ENCODE measurements at regions of chr4 and their contacts with region 1.

Region 1: GRCh38 chr4:48963042-48963679 is 22.9 kb upstream of the CWH43 start:
- DNase-seq: peak; percentile 80
- ATAC-seq: peak; percentile 96
- H3K4me3 ChIP-seq: no peak overlapping the region
- H3K4me3 Mint-ChIP-seq: no peak overlapping the region
- H3K27ac ChIP-seq: no peak overlapping the region
- H3K27ac Mint-ChIP-seq: no peak overlapping the region
- H3K4me1 ChIP-seq: no peaks in the 10 kb centered on the region
- H3K4me1 Mint-ChIP-seq: no peaks in the 10 kb centered on the region
- H3K27me3 ChIP-seq: no peaks in the 10 kb centered on the region
- H3K27me3 Mint-ChIP-seq: peaks cover 12% of the 10 kb centered on the region
- CTCF ChIP-seq: peak; percentile 99

Region 2: DNA sequence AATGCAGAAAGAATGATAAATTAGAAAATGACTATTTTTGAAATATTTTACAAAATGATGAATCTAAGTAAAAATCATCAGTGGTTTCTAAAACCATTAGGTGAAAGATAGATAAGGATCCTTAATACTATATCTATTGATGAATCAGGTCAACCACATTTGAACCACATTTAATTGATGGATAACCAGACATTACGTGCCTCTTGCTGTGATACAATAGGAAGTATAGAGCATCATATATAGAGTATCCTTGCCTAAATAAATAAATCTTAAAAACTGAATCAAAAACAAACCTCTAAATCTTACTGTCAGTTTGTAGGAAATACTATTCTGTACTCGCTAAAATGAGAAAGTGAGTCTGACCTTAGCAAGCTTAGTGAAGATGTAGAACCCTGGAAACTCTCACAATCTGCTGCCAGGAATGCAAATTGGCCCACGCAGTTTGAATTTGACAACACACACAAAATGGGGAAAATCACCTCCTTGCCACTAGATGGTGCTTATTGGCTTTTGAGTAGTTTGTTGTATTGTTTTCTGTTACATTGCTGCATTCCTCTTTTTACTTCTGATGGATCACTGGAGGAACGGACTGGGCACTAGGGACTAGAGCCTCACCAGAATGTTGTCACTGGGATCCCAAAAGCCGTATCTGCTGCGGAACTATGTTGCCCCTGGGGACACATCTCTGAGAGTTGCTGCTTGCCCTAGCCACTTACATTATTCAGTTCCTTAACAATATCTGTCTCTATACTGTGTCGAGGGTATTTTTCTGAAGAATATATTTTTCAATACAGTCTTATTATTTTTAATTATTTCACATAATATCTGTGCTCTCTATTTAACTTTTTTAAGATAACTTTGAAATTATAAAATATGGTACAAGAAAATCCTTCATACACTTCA is 647.2 kb before region 1 on chr4:
- CTCF ChIA-PET with region 1: no interaction called
- POLR2A ChIA-PET with region 1: no interaction called
- intact Hi-C with region 1: loop called (anchors 10 kb)
- DNase-seq: peak; percentile 57
- ATAC-seq: peak; percentile 28
- H3K4me3 ChIP-seq: no peak overlapping the region
- H3K4me3 Mint-ChIP-seq: no peak overlapping the region
- H3K27ac ChIP-seq: no peak overlapping the region
- H3K27ac Mint-ChIP-seq: no peak overlapping the region
- H3K4me1 ChIP-seq: no peaks in the 10 kb centered on the region
- H3K4me1 Mint-ChIP-seq: no peaks in the 10 kb centered on the region
- H3K27me3 ChIP-seq: no peaks in the 10 kb centered on the region
- H3K27me3 Mint-ChIP-seq: no peaks in the 10 kb centered on the region
- CTCF ChIP-seq: peak; percentile 68

Region 3: GRCh38 chr4:48445704-48446103 is 517.5 kb before region 1 on chr4:
- CTCF ChIA-PET with region 1: interaction called, 5 read pairs
- POLR2A ChIA-PET with region 1: no interaction called
- intact Hi-C with region 1: loop called (anchors 2 kb)
- DNase-seq: peak; percentile 11
- ATAC-seq: no peak
- H3K4me3 ChIP-seq: no peak overlapping the region
- H3K4me3 Mint-ChIP-seq: no peak overlapping the region
- H3K27ac ChIP-seq: no peak overlapping the region
- H3K27ac Mint-ChIP-seq: no peak overlapping the region
- H3K4me1 ChIP-seq: no peaks in the 10 kb centered on the region
- H3K4me1 Mint-ChIP-seq: no peaks in the 10 kb centered on the region
- H3K27me3 ChIP-seq: peaks cover 0 to 6% (median 0%) of the 10 kb centered on the region in 4 experiments
- H3K27me3 Mint-ChIP-seq: peaks cover 6% of the 10 kb centered on the region
- CTCF ChIP-seq: peak; percentile 77

Region 4: DNA sequence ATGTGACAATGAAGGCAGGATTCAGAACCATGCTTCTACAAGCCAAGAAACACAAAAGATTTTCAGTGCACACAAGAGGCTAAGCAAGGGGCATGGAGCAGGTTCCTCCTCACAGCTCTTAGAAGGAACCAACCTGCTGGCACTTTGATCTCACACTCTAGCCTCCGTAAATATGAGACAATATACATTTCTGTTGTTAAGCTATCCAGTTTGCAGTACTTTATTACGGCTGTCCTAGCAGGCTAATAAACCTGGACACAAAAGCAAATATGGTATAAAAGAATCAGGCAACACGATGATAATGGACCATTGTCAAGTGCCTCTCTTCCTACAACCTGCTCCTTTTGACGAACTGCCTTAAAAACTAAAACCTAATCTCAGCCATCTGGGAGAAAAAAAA is 358.6 kb before region 1 on chr4:
- CTCF ChIA-PET with region 1: interaction called, 4 read pairs
- POLR2A ChIA-PET with region 1: interaction called, 10 read pairs
- intact Hi-C with region 1: no loop called
- DNase-seq: no peak
- ATAC-seq: no peak
- H3K4me3 ChIP-seq: no peak overlapping the region
- H3K4me3 Mint-ChIP-seq: no peak overlapping the region
- H3K27ac ChIP-seq: no peak overlapping the region
- H3K27ac Mint-ChIP-seq: no peak overlapping the region
- H3K4me1 ChIP-seq: no peaks in the 10 kb centered on the region
- H3K4me1 Mint-ChIP-seq: no peaks in the 10 kb centered on the region
- H3K27me3 ChIP-seq: no peaks in the 10 kb centered on the region
- H3K27me3 Mint-ChIP-seq: no peaks in the 10 kb centered on the region
- CTCF ChIP-seq: no peak

Region 5: DNA sequence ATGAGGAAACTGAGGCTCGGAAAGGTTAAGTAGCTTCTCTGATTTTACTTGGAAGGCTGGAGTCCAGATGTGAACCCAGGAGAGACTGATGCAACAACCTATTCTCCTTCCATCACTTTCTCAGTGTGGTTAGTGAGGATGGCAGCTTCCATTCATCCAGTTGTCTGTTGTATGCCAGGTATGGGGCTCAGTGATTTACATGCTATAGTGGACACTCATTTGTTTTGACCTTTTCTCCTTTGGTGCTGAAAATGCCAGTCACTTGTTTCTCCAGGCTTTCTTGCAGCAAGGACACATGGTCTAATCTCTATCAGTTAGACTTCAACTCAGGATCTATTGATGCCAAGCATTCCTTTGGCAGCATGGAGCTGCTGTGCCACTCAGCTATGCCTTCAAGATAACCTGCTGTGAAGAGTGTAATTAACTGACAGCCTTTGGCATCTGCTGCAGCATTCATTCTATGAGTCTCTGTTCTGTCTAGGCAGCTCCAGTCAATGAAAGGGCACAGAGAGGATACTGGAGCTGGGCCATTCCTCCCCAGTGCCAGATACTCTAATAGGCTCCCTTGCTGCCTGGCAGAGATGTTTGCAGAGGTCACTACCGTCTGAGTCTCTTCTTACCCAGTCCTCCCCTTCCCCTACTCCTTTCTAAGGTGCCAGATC is 11.9 kb after region 1 on chr4:
- CTCF ChIA-PET with region 1: no interaction called
- POLR2A ChIA-PET with region 1: no interaction called
- intact Hi-C with region 1: no loop called
- DNase-seq: no peak
- ATAC-seq: no peak
- H3K4me3 ChIP-seq: no peak overlapping the region
- H3K4me3 Mint-ChIP-seq: no peak overlapping the region
- H3K27ac ChIP-seq: no peak overlapping the region
- H3K27ac Mint-ChIP-seq: no peak overlapping the region
- H3K4me1 ChIP-seq: no peaks in the 10 kb centered on the region
- H3K4me1 Mint-ChIP-seq: peaks cover 4% of the 10 kb centered on the region
- H3K27me3 ChIP-seq: peaks cover 0 to 4% (median 1%) of the 10 kb centered on the region in 4 experiments
- H3K27me3 Mint-ChIP-seq: peaks cover 32% of the 10 kb centered on the region
- CTCF ChIP-seq: no peak